HepG2 (cell line): ENCODE measurements at regions of chr5 and their contacts with region 1.

Region 1: GRCh38 chr5:83877911-83878706 is 157.5 kb upstream of the HAPLN1 start:
- DNase-seq: no peak
- ATAC-seq: no peak
- H3K4me3 ChIP-seq: no peak overlapping the region
- H3K27ac ChIP-seq: no peak overlapping the region
- H3K4me1 ChIP-seq: peaks cover 2% of the 10 kb centered on the region; the same call in 1 of the 2 replicates
- H3K27me3 ChIP-seq: no peaks in the 10 kb centered on the region
- CTCF ChIP-seq: no peak
- EP300 ChIP-seq: no peak
- POLR2A ChIP-seq: no peak
- RAD21 ChIP-seq: no peak

Region 2: DNA sequence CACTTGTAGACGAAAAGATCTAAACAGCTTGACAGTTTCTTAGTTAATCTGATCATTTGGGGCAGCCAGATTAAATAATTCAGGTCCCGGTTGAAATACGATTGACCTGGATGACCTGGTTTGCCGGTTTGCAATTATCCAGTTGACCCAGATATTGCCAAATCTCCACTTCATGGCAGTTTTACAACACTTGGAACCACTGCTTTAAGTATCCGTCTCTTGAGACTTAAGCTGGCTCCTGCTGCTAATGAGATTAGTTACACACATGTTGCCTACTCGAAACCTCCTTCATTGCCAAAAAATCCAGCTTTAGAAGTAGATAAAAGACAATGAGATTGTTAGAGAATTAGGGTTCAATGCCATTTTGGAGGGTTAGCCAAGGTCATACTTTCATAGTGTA is 21.2 kb before region 1 on chr5:
- CTCF ChIA-PET with region 1: no interaction called
- POLR2A ChIA-PET with region 1: no interaction called
- in situ Hi-C with region 1: no loop called
- intact Hi-C with region 1: loop called (anchors 1 kb)
- DNase-seq: no peak
- ATAC-seq: no peak
- H3K4me3 ChIP-seq: no peak overlapping the region
- H3K27ac ChIP-seq: no peak overlapping the region
- H3K4me1 ChIP-seq: no peaks in the 10 kb centered on the region
- H3K27me3 ChIP-seq: no peaks in the 10 kb centered on the region
- CTCF ChIP-seq: no peak
- EP300 ChIP-seq: no peak
- POLR2A ChIP-seq: no peak
- RAD21 ChIP-seq: no peak